Panc1 (cell line): ENCODE measurements at regions of chr4 and their contacts with region 1.

Region 1: DNA sequence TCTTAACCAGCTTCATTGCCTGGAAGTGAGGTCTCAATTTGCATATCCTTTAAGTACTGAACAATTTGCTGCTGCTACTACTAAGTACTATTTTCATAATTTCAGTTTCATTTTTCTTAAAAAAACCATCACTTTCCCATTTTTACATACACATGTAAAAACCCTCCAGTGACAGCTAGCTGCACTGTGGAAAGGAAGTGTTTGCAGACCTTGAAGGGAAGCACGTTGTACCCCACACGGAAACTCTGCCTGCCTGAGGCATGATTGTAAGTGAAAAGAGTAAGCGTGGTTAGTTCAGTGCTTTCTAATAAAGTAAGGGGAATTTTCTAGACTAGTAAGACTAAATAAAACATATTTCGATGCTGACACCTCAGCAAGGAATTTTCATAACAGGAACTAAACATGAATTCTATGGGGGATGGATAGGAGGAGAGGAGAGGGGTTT is 103.6 kb downstream of the RAPGEF2 start:
- DNase-seq: no peak
- ATAC-seq: no peak
- H3K4me3 ChIP-seq: no peak overlapping the region
- H3K27ac ChIP-seq: no peak overlapping the region
- H3K4me1 ChIP-seq: no peaks in the 10 kb centered on the region
- H3K27me3 ChIP-seq: no peaks in the 10 kb centered on the region
- CTCF ChIP-seq: no peak

Region 2: GRCh38 chr4:159446266-159446976 is 240.0 kb after region 1 on chr4:
- CTCF ChIA-PET with region 1: no interaction called
- POLR2A ChIA-PET with region 1: no interaction called
- in situ Hi-C with region 1: no loop called
- intact Hi-C with region 1: loop called (anchors 10 kb)
- DNase-seq: peak; percentile 41
- ATAC-seq: peak; percentile 100
- H3K4me3 ChIP-seq: no peak overlapping the region
- H3K27ac ChIP-seq: no peak overlapping the region
- H3K4me1 ChIP-seq: no peaks in the 10 kb centered on the region
- H3K27me3 ChIP-seq: no peaks in the 10 kb centered on the region
- CTCF ChIP-seq: peak; percentile 82

Region 3: DNA sequence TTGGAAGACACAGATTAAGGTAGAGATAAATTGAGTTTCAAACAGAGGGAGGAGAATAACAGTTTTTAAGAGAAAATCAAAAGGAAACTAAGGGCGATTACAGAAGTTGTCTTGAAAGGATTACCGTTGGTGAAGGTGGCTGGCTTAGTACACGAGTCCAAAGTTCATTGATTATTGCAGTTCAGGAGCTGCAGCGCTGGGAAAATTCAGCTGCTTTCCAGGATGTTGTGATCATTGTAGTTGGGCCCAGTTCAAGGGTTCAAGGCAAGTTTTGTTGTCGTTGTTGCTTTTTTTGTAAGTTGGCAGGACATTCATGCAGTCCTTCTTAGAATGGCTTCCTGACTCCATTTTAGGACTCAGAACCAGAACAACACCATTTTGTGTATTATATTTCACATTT is 358.2 kb after region 1 on chr4:
- CTCF ChIA-PET with region 1: no interaction called
- POLR2A ChIA-PET with region 1: no interaction called
- in situ Hi-C with region 1: no loop called
- intact Hi-C with region 1: no loop called
- DNase-seq: no peak
- ATAC-seq: no peak
- H3K4me3 ChIP-seq: no peak overlapping the region
- H3K27ac ChIP-seq: no peak overlapping the region
- H3K4me1 ChIP-seq: no peaks in the 10 kb centered on the region
- H3K27me3 ChIP-seq: no peaks in the 10 kb centered on the region
- CTCF ChIP-seq: no peak